Natural killer cell (primary cell): ENCODE measurements at regions of chr1 and their contacts with region 1.

Region 1: GRCh38 chr1:235415008-235415904 is 48.0 kb downstream of the TBCE start:
- DNase-seq: peak; percentile 29 to 79
- ATAC-seq: peak; percentile 75 to 92 (median 83)
- H3K4me3 ChIP-seq: no peak overlapping the region
- H3K4me3 Mint-ChIP-seq: no peak overlapping the region
- H3K27ac ChIP-seq: no peak overlapping the region
- H3K27ac Mint-ChIP-seq: no peak overlapping the region
- H3K4me1 ChIP-seq: no peaks in the 10 kb centered on the region
- H3K4me1 Mint-ChIP-seq: peaks cover 6 to 9% of the 10 kb centered on the region in 2 donors
- H3K27me3 ChIP-seq: no peaks in the 10 kb centered on the region
- H3K27me3 Mint-ChIP-seq: no peaks in the 10 kb centered on the region
- CTCF ChIP-seq: peak; percentile 89

Region 2: GRCh38 chr1:235093696-235094592 is 321.3 kb before region 1 on chr1:
- intact Hi-C with region 1: loop called (anchors 1 kb)
- DNase-seq: peak; percentile 77 to 90
- ATAC-seq: peak; percentile 95 to 99 (median 99)
- H3K4me3 ChIP-seq: no peak overlapping the region
- H3K4me3 Mint-ChIP-seq: no peak overlapping the region
- H3K27ac ChIP-seq: no peak overlapping the region
- H3K27ac Mint-ChIP-seq: no peak overlapping the region
- H3K4me1 ChIP-seq: peaks cover 8% of the 10 kb centered on the region
- H3K4me1 Mint-ChIP-seq: peaks cover 7% of the 10 kb centered on the region in 2 donors
- H3K27me3 ChIP-seq: no peaks in the 10 kb centered on the region
- H3K27me3 Mint-ChIP-seq: peaks cover 7 to 8% of the 10 kb centered on the region in 2 donors
- CTCF ChIP-seq: peak; percentile 92

Region 3: GRCh38 chr1:235105051-235106043 is 309.9 kb before region 1 on chr1:
- intact Hi-C with region 1: loop called (anchors 1 kb)
- DNase-seq: peak in 1 of 2 donors; percentile 63
- ATAC-seq: peak; percentile 43 to 73 (median 68)
- H3K4me3 ChIP-seq: no peak overlapping the region
- H3K4me3 Mint-ChIP-seq: peak overlapping the region; percentile 85
- H3K27ac ChIP-seq: peak overlapping the region; percentile 30
- H3K27ac Mint-ChIP-seq: peak overlapping the region; percentile 66 to 78
- H3K4me1 ChIP-seq: peaks cover 12% of the 10 kb centered on the region
- H3K4me1 Mint-ChIP-seq: peaks cover 20 to 23% of the 10 kb centered on the region in 2 donors
- H3K27me3 ChIP-seq: peaks cover 3% of the 10 kb centered on the region
- H3K27me3 Mint-ChIP-seq: peaks cover 0 to 6% of the 10 kb centered on the region in 2 donors
- CTCF ChIP-seq: no peak

Region 4: DNA sequence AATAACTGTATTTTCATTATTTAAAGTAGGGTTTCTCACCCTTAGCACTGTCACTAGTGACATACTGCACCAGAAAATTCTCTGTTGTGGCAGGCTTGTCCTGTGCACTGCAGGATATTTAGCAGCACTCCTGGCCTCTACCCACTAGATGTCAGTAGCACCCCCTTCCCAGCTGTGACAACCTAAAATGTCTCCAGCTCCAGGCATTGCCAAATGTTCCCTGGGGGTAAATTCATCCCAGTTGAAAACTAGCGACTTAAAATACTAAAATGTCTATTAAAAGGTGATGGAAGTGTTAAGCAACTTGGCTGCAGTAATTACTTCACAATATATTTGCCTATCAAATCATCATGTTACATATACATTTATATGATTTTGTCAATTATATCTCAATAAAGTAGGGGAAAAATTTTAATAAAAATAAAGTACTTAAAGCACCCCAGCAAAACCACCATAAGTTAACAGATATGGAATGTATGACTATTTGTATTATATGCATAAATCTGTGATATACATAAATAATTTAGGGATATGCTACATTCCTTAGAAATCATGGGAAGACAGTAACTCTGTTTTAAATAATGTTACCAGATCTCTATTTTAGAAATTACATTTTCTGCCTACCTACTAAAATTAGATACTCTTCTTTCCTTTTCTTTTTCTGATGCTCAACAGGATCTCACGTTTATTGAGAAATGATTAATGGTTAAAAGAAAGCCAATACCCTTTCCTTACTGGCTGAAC is 161.9 kb before region 1 on chr1:
- intact Hi-C with region 1: loop called (anchors 1 kb)
- DNase-seq: peak; percentile 34 to 84
- ATAC-seq: peak; percentile 89 to 95 (median 91)
- H3K4me3 ChIP-seq: no peak overlapping the region
- H3K4me3 Mint-ChIP-seq: no peak overlapping the region
- H3K27ac ChIP-seq: no peak overlapping the region
- H3K27ac Mint-ChIP-seq: peak overlapping the region in 1 of 2 donors; percentile 40
- H3K4me1 ChIP-seq: peaks cover 10% of the 10 kb centered on the region
- H3K4me1 Mint-ChIP-seq: peaks cover 19 to 30% of the 10 kb centered on the region in 2 donors
- H3K27me3 ChIP-seq: no peaks in the 10 kb centered on the region
- H3K27me3 Mint-ChIP-seq: no peaks in the 10 kb centered on the region
- CTCF ChIP-seq: peak; percentile 92

Region 5: GRCh38 chr1:235583511-235584001 is 168.3 kb after region 1 on chr1:
- intact Hi-C with region 1: no loop called
- DNase-seq: no peak
- ATAC-seq: no peak
- H3K4me3 ChIP-seq: no peak overlapping the region
- H3K4me3 Mint-ChIP-seq: no peak overlapping the region
- H3K27ac ChIP-seq: no peak overlapping the region
- H3K27ac Mint-ChIP-seq: no peak overlapping the region
- H3K4me1 ChIP-seq: no peaks in the 10 kb centered on the region
- H3K4me1 Mint-ChIP-seq: peaks cover 0 to 11% of the 10 kb centered on the region in 2 donors
- H3K27me3 ChIP-seq: no peaks in the 10 kb centered on the region
- H3K27me3 Mint-ChIP-seq: peaks cover 9 to 34% of the 10 kb centered on the region in 2 donors
- CTCF ChIP-seq: no peak

Region 6: DNA sequence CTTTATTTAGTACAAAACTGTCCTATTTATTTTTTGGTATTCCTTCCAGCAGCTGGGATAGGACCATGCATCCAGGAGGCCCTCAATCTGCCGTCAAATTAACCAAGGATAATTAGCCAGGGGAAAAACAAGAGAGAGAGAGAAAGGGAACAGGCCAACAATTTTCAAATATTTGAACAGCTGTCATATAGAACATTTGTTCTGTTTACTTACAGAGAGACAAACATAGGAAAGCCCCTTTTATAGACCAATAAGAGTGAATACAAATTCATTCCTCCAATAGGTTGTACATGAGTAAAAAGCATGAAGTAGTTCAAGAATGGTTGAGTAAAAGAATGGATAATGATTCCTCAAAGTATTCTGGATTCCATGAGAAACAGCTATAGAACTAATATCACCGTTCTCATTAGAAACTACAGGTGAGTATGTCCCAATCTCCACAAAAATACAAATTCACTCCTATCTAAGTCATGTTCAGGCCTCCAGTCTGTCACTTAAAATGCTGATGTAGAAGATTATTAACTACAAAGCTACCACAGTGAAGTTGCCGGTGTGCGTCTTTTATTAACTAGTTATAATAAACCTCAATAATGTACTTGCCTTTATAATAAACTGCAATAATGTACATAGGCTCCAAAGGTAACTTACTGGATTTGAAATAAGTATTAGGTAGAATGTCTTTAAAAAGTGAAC is 299.1 kb after region 1 on chr1:
- intact Hi-C with region 1: no loop called
- DNase-seq: no peak
- ATAC-seq: no peak
- H3K4me3 ChIP-seq: no peak overlapping the region
- H3K4me3 Mint-ChIP-seq: no peak overlapping the region
- H3K27ac ChIP-seq: no peak overlapping the region
- H3K27ac Mint-ChIP-seq: peak overlapping the region in 1 of 2 donors; percentile 18
- H3K4me1 ChIP-seq: no peaks in the 10 kb centered on the region
- H3K4me1 Mint-ChIP-seq: no peaks in the 10 kb centered on the region
- H3K27me3 ChIP-seq: no peaks in the 10 kb centered on the region
- H3K27me3 Mint-ChIP-seq: no peaks in the 10 kb centered on the region
- CTCF ChIP-seq: no peak

Region 7: DNA sequence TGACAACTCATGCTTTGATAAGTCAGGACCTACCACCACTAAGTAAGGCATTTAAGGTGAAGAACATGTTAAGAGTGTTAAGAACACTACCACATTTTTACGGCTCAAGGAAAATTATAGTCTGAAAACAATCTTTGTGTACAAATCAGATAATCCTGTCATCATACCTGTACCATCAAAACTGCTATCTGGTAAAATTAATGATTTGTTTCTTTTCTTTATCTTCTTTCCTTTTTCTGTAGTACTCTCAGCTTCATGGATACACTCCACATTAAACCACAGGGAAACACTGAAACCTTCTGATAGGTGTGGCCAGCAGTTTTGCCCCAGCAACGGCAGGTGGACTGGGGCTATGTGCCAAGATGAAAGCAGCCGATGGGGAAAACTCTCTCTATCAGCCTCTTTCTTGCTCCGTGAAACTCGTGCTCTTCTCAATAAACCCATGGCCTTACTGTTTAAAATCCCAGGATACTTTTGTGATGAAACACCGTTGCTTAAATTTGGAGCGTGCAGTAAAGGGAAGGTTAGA is 376.3 kb after region 1 on chr1:
- intact Hi-C with region 1: no loop called
- DNase-seq: no peak
- ATAC-seq: no peak
- H3K4me3 ChIP-seq: no peak overlapping the region
- H3K4me3 Mint-ChIP-seq: no peak overlapping the region
- H3K27ac ChIP-seq: no peak overlapping the region
- H3K27ac Mint-ChIP-seq: no peak overlapping the region
- H3K4me1 ChIP-seq: no peaks in the 10 kb centered on the region
- H3K4me1 Mint-ChIP-seq: peaks cover 0 to 5% of the 10 kb centered on the region in 2 donors
- H3K27me3 ChIP-seq: no peaks in the 10 kb centered on the region
- H3K27me3 Mint-ChIP-seq: no peaks in the 10 kb centered on the region
- CTCF ChIP-seq: no peak

Region 8: DNA sequence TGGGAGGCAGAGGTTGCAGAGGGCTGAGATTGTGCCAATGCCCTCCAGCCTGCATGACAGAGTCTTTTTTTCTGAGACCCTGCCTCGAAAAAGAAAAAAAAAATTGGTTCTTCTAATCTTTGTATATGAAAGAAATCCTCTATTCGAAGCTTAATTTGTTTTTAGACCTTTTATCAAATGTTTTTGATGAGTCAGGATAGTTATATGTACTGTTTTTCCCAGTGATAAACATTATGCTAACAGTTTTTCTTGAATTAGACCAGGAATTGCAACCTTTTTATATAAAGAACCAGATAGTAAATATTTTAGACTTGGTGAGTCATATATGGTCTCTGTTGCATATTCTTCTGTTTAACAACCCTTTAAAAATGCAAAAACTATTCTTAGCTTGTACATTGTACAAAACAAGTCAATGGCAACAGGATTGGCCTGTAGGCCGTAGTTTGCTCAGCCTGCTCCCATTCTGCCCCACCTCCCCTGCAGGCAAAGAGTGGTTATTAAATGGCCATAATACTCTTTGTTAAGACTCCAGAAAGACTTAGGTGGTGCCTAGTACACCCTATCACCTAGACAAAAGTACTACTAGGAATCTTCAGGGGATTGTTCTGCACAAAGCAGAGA is 406.2 kb after region 1 on chr1:
- intact Hi-C with region 1: no loop called
- DNase-seq: no peak
- ATAC-seq: no peak
- H3K4me3 ChIP-seq: no peak overlapping the region
- H3K4me3 Mint-ChIP-seq: no peak overlapping the region
- H3K27ac ChIP-seq: no peak overlapping the region
- H3K27ac Mint-ChIP-seq: peak overlapping the region in 1 of 2 donors; percentile 51
- H3K4me1 ChIP-seq: no peaks in the 10 kb centered on the region
- H3K4me1 Mint-ChIP-seq: peaks cover 11 to 45% of the 10 kb centered on the region in 2 donors
- H3K27me3 ChIP-seq: no peaks in the 10 kb centered on the region
- H3K27me3 Mint-ChIP-seq: no peaks in the 10 kb centered on the region
- CTCF ChIP-seq: no peak